T-cell (primary cell): ENCODE measurements at regions of chr14 and their contacts with region 1.

Region 1: GRCh38 chr14:100078991-100079725 is 13.9 kb downstream of the EVL start:
- DNase-seq: peak; percentile 67 to 92 (median 85)
- ATAC-seq: peak; percentile 82 to 88 (median 84)
- H3K4me3 ChIP-seq: peak overlapping the region; percentile 31 to 58
- H3K4me3 Mint-ChIP-seq: peak overlapping the region; percentile 69 to 87 (median 69)
- H3K27ac ChIP-seq: peak overlapping the region; percentile 60
- H3K27ac Mint-ChIP-seq: peak overlapping the region; percentile 98
- H3K4me1 ChIP-seq: peaks cover 89 to 96% of the 10 kb centered on the region in 2 experiments
- H3K4me1 Mint-ChIP-seq: peaks cover 99 to 100% (median 99%) of the 10 kb centered on the region in 3 donors
- H3K27me3 ChIP-seq: no peaks in the 10 kb centered on the region
- H3K27me3 Mint-ChIP-seq: no peaks in the 10 kb centered on the region

Region 2: DNA sequence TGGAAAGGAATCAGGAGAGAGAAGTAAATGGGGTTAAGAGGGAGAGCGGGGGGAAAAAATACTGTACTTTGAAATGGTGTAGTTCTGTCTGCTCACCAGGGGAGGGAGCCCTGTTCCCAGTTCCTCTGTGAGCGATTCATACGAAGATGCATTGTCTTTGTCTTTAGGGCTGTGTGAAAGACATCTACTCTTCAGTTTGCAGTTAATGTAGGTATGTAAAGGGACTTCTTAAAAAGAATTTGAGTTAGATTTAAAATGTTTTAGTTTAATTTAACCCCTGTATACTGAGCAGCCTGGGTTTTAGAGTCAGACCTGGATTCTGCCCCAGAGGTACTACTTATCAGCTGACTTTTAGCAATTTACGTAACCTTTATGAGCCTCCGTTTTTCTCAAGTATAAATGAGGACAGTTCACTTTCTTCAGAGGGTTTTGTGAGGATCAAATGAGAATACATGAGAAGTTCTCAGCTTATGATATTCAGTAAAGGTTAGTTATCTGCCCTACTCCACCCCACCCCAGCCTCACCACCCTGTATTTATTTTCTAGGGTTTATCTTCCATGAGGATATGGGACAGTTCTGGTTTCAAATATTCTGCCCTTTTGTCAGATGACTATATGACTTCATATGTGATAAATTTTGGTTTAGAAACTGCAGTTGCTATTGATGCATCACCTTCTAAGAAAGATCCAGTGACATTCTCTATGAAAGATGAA is 96.5 kb before region 1 on chr14:
- CTCF ChIA-PET with region 1: interaction called in 1 of 2 experiments, 11 read pairs
- POLR2A ChIA-PET with region 1: no interaction called
- DNase-seq: peak; percentile 29 to 86 (median 52)
- ATAC-seq: peak; percentile 94 to 95 (median 94)
- H3K4me3 ChIP-seq: no peak overlapping the region
- H3K4me3 Mint-ChIP-seq: no peak overlapping the region
- H3K27ac ChIP-seq: no peak overlapping the region
- H3K27ac Mint-ChIP-seq: no peak overlapping the region
- H3K4me1 ChIP-seq: peaks cover 0 to 16% of the 10 kb centered on the region in 2 experiments
- H3K4me1 Mint-ChIP-seq: peaks cover 8 to 14% (median 13%) of the 10 kb centered on the region in 3 donors
- H3K27me3 ChIP-seq: no peaks in the 10 kb centered on the region
- H3K27me3 Mint-ChIP-seq: no peaks in the 10 kb centered on the region

Region 3: GRCh38 chr14:100056964-100057795 is 22.0 kb before region 1 on chr14:
- CTCF ChIA-PET with region 1: interaction called in 1 of 2 experiments, 12 read pairs
- POLR2A ChIA-PET with region 1: interaction called, 6 to 13 read pairs
- DNase-seq: peak in 6 of 35 experiments; percentile 28 to 80 (median 42)
- ATAC-seq: peak; percentile 75 to 83 (median 80)
- H3K4me3 ChIP-seq: no peak overlapping the region
- H3K4me3 Mint-ChIP-seq: peak overlapping the region in 2 of 3 donors; percentile 41 to 49
- H3K27ac ChIP-seq: no peak overlapping the region
- H3K27ac Mint-ChIP-seq: peak overlapping the region; percentile 90 to 93
- H3K4me1 ChIP-seq: peaks cover 37 to 52% of the 10 kb centered on the region in 2 experiments
- H3K4me1 Mint-ChIP-seq: peaks cover 54 to 67% (median 56%) of the 10 kb centered on the region in 3 donors
- H3K27me3 ChIP-seq: no peaks in the 10 kb centered on the region
- H3K27me3 Mint-ChIP-seq: no peaks in the 10 kb centered on the region

Region 4: DNA sequence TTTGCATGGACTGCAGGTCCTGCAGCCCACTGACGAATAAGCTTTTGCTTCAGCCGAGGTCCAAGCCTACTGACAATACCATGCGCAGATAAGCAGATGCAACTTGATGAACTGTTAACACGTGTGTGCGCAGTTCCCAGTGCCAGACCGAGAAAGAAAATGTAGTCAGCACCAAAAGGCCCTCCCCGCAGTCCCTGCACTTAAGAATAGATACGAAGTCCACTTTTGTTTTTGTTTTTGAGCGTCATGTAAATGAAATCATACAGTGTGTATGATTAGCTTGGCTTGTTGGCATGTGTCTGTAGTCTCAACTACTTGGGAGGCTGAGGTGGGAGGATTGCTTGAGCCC is 21.2 kb after region 1 on chr14:
- CTCF ChIA-PET with region 1: interaction called, 13 to 174 read pairs
- POLR2A ChIA-PET with region 1: interaction called, 7 to 8 read pairs
- DNase-seq: no peak
- ATAC-seq: no peak
- H3K4me3 ChIP-seq: peak overlapping the region in 1 of 2 donors; percentile 18
- H3K4me3 Mint-ChIP-seq: peak overlapping the region; percentile 54 to 81 (median 56)
- H3K27ac ChIP-seq: peak overlapping the region; percentile 35
- H3K27ac Mint-ChIP-seq: peak overlapping the region; percentile 91 to 94
- H3K4me1 ChIP-seq: peaks cover 75 to 97% of the 10 kb centered on the region in 2 experiments
- H3K4me1 Mint-ChIP-seq: peaks cover 97 to 100% (median 98%) of the 10 kb centered on the region in 3 donors
- H3K27me3 ChIP-seq: no peaks in the 10 kb centered on the region
- H3K27me3 Mint-ChIP-seq: no peaks in the 10 kb centered on the region

Region 5: GRCh38 chr14:100108042-100108825 is 29.1 kb after region 1 on chr14:
- CTCF ChIA-PET with region 1: interaction called, 9 to 174 read pairs
- POLR2A ChIA-PET with region 1: interaction called, 7 to 11 read pairs
- DNase-seq: peak; percentile 67 to 92 (median 85)
- ATAC-seq: peak; percentile 64 to 68 (median 66)
- H3K4me3 ChIP-seq: no peak overlapping the region
- H3K4me3 Mint-ChIP-seq: peak overlapping the region in 1 of 3 donors; percentile 81
- H3K27ac ChIP-seq: peak overlapping the region; percentile 81
- H3K27ac Mint-ChIP-seq: peak overlapping the region; percentile 94 to 96
- H3K4me1 ChIP-seq: peaks cover 45 to 85% of the 10 kb centered on the region in 2 experiments
- H3K4me1 Mint-ChIP-seq: peaks cover 81 to 85% (median 81%) of the 10 kb centered on the region in 3 donors
- H3K27me3 ChIP-seq: no peaks in the 10 kb centered on the region
- H3K27me3 Mint-ChIP-seq: no peaks in the 10 kb centered on the region